Uterus (tissue), 4 donors: ENCODE measurements at regions of chr6 and their contacts with region 1.

Region 1: DNA sequence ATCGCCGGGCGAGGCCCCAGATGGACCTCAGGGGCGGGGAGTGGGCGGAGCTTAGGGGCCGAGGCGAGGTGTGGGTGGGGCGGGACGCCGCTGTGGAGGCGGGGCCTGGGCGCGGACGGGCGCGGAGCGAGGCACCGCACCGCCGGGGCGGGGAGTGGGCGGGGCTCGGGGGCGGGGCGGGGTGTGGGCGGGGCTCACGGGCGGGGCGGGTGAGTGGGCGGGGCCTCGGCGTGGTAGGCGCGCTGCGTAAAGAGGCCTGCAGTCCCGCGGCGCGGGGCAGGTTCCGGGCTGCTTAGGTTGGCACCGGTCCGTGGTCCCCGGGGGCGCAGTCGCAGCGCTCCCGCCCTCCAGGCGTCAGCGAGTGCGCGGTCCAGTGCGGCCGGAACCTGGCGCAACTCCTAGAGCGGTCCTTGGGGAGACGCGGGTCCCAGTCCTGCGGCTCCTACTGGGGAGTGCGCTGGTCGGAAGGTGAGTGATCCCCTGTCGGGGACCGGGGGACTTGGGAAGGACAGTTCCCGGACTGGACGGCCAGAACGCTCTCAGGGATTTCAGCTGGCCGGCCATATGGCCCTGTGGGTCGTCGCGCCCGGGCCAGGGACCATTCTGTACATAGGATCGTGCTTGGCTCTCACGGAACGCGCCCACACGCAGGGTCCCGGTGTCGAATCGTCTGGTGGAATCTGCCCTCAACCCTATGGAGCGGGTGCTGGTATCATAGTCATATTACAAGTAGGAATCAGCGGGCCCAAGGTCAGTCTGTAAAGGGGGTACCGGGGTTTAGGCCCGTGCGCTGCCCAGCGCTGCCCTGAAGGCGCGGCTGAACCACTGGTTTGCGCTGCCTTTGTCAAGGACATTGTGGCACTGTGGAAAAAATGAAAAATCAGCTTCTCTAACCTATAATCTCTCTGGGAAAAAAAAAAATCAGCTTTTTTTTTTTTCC is at the start of gene NQO2:
- DNase-seq: peak; percentile 93 to 97
- H3K4me3 ChIP-seq: peak within 1 kb of the TSS; percentile 70 to 95
- H3K27ac ChIP-seq: peak within 1 kb of the TSS; percentile 80 to 87
- H3K4me1 ChIP-seq: no peaks in the 10 kb centered on the region
- H3K27me3 ChIP-seq: no peaks in the 10 kb centered on the region
- CTCF ChIP-seq: peak in 2 of 4 experiments; percentile 25 to 30
- POLR2A ChIP-seq: peak; percentile 90 to 92
- total RNA-seq, gene NQO2: 7.8 to 50.3 (median 21.6) TPM

Region 2: GRCh38 chr6:3057063-3057770 is 57.3 kb after region 1 on chr6:
- intact Hi-C with region 1: loop called (anchors 5 kb)
- DNase-seq: no peak
- H3K4me3 ChIP-seq: no peak overlapping the region
- H3K27ac ChIP-seq: no peak overlapping the region
- H3K4me1 ChIP-seq: no peaks in the 10 kb centered on the region
- H3K27me3 ChIP-seq: no peaks in the 10 kb centered on the region
- CTCF ChIP-seq: no peak
- POLR2A ChIP-seq: no peak

Region 3: GRCh38 chr6:3251462-3252314 is 251.8 kb after region 1 on chr6:
- intact Hi-C with region 1: no loop called
- DNase-seq: peak; percentile 81 to 83
- H3K4me3 ChIP-seq: no peak overlapping the region
- H3K27ac ChIP-seq: no peak overlapping the region
- H3K4me1 ChIP-seq: no peaks in the 10 kb centered on the region
- H3K27me3 ChIP-seq: no peaks in the 10 kb centered on the region
- CTCF ChIP-seq: peak; percentile 91 to 98 (median 95)
- POLR2A ChIP-seq: no peak